ENCODE measurements at regions of chr2 and their contacts with region 1.

Region 1: GRCh38 chr2:25651071-25651470 is 22.3 kb downstream of the DTNB start:
- DNase-seq: no peak
- ATAC-seq: no peak
- H3K4me3 ChIP-seq: no peak overlapping the region
- H3K27ac ChIP-seq: peak overlapping the region in 1 of 10 donors; percentile 87
- H3K4me1 ChIP-seq: peaks cover 0 to 18% (median 0%) of the 10 kb centered on the region in 9 donors
- H3K27me3 ChIP-seq: no peaks in the 10 kb centered on the region
- CTCF ChIP-seq: no peak

Region 2: DNA sequence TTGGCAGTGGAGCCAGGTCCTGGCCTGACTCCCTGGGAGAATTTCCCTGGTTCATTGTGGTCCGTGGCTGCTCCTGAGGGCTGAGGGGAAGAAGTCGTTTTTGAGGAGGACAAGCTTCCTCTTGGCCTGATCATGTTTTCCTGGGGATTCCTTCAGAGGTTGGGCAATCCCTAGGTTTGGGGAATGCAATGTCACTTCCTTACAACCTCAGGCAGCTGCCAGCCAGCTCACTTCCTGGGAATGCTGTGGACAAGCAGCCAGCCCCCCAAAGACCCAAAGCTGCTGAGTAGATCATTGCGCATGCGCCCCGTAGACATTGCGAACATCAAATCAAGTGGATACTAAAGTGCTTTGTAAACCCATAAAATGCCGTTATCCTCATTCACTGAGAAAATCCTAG is 301.7 kb before region 1 on chr2:
- intact Hi-C with region 1: loop called in 1 of 10 experiments (anchors 10 kb)
- DNase-seq: no peak
- ATAC-seq: peak in 1 of 8 donors; percentile 29
- H3K4me3 ChIP-seq: no peak overlapping the region
- H3K27ac ChIP-seq: no peak overlapping the region
- H3K4me1 ChIP-seq: peaks cover 0 to 19% (median 0%) of the 10 kb centered on the region in 9 donors
- H3K27me3 ChIP-seq: peaks cover 0 to 6% (median 0%) of the 10 kb centered on the region in 7 donors
- CTCF ChIP-seq: no peak

Region 3: DNA sequence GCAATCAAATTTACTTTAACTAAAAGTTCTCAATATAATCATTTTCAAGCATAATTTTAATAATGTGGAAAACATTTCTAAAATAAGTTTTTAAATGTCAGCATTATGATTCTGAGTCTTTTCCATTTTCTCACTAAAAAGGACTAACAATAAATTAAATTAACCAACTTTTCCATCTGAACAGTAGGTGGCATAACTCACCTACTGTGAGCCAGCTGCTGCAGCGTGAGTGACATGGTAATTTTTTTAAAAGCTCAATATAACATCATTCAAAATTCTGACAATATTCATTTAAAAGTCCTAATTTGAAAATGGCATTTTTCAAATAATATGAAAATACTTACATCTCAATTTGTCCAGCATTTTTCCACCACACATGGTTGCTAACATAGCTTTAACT is 44.2 kb before region 1 on chr2:
- intact Hi-C with region 1: loop called in 1 of 10 experiments (anchors 5 kb)
- DNase-seq: no peak
- ATAC-seq: peak in 1 of 8 donors; percentile 49
- H3K4me3 ChIP-seq: no peak overlapping the region
- H3K27ac ChIP-seq: no peak overlapping the region
- H3K4me1 ChIP-seq: no peaks in the 10 kb centered on the region
- H3K27me3 ChIP-seq: no peaks in the 10 kb centered on the region
- CTCF ChIP-seq: peak; percentile 22 to 80 (median 69)

Region 4: DNA sequence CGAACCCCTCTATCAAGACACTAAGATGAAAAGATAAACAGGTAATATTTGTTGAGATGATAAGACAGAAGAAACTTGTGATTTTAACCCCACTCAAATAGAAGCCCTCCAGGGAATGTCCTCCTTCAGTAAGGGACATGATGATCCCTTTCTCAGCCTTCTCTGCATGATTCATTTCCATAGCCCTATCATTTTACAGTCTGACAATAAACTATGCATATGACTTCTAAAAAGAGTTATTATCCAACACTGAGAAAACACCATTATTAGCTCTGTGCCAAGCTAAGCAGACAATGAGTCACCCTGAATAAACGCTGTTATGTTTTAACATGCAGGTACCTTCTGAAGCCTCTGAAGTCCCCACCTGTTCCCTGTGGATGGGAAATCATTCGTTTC is 32.4 kb before region 1 on chr2:
- intact Hi-C with region 1: loop called in 1 of 10 experiments (anchors 5 kb)
- DNase-seq: no peak
- ATAC-seq: no peak
- H3K4me3 ChIP-seq: no peak overlapping the region
- H3K27ac ChIP-seq: peak overlapping the region in 7 of 10 donors; percentile 37 to 75 (median 47)
- H3K4me1 ChIP-seq: peaks cover 0 to 26% (median 14%) of the 10 kb centered on the region in 9 donors
- H3K27me3 ChIP-seq: no peaks in the 10 kb centered on the region
- CTCF ChIP-seq: no peak

Region 5: GRCh38 chr2:27218614-27219013 is 1567.5 kb after region 1 on chr2:
- intact Hi-C with region 1: no loop called
- DNase-seq: no peak
- ATAC-seq: no peak
- H3K4me3 ChIP-seq: no peak overlapping the region
- H3K27ac ChIP-seq: no peak overlapping the region
- H3K4me1 ChIP-seq: peaks cover 0 to 22% (median 16%) of the 10 kb centered on the region in 9 donors
- H3K27me3 ChIP-seq: no peaks in the 10 kb centered on the region
- CTCF ChIP-seq: no peak

Measured in heart right ventricle (tissue), 16 donors.